HepG2 (cell line): ENCODE measurements at regions of chr16 and their contacts with region 1.

Region 1: DNA sequence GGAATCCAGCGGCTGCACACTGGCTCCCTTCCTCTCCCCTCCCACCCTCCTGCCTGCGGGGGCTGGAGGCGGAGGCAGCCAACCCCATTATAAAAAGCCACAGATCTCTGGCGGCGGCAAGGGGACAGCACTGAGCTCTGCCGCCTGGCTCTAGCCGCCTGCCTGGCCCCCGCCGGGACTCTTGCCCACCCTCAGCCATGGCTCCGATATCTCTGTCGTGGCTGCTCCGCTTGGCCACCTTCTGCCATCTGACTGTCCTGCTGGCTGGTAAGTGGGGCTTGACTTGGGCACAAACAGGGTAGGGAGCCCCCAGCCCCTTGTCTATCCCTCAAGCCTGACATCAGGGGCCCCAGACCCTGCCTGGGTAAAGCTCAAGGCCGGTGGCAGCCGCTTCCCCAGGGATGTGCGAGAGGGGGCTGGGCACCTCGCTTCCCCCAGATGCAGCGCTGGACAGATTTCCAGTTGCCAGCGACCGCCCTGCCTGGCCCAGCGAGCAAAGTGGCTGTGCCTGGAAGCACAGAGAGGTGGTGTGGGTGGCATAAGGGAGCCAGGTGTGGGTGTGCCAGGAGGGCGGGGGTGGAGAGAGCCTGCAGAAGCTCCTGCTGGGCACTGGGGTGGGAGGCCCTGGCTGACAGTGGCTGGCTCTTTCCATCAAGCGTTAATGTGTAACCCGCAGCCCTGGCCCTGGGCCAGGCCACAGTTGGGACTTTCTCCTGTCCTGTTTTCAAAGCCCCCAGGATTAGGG is at the start of gene CX3CL1:
- DNase-seq: peak; percentile 99
- ATAC-seq: peak; percentile 83
- H3K4me3 ChIP-seq: peak within 1 kb of the TSS; percentile 81 to 95 (median 84)
- H3K27ac ChIP-seq: peak within 1 kb of the TSS; percentile 99
- H3K4me1 ChIP-seq: peaks cover 62% of the 10 kb centered on the region
- H3K27me3 ChIP-seq: no peaks in the 10 kb centered on the region; a peak in 1 of 5 replicates
- CTCF ChIP-seq: peak; percentile 59
- EP300 ChIP-seq: peak; percentile 57 to 98; a peak in 2 of 4 replicates
- POLR2A ChIP-seq: peak; percentile 96 to 98
- RAD21 ChIP-seq: peak; percentile 65
- total RNA-seq, gene CX3CL1: 23.4 and 57.3 TPM in 2 replicates

Region 2: GRCh38 chr16:56866943-56867830 is 505.4 kb before region 1 on chr16:
- CTCF ChIA-PET with region 1: no interaction called
- POLR2A ChIA-PET with region 1: no interaction called
- in situ Hi-C with region 1: no loop called
- intact Hi-C with region 1: no loop called
- DNase-seq: peak; percentile 70
- ATAC-seq: peak; percentile 6; the same call in 1 of the 3 replicates
- H3K4me3 ChIP-seq: peak overlapping the region in 2 of 3 experiments; percentile 29 to 50; a peak in 4 of 6 replicates
- H3K27ac ChIP-seq: no peak overlapping the region
- H3K4me1 ChIP-seq: peaks cover 56% of the 10 kb centered on the region
- H3K27me3 ChIP-seq: no peaks in the 10 kb centered on the region
- CTCF ChIP-seq: peak; percentile 74
- EP300 ChIP-seq: no peak
- POLR2A ChIP-seq: no peak
- RAD21 ChIP-seq: peak; percentile 59

Region 3: GRCh38 chr16:57185944-57186871 is 186.3 kb before region 1 on chr16 and contains the starts of genes PSME3IP1 and RSPRY1:
- CTCF ChIA-PET with region 1: no interaction called
- POLR2A ChIA-PET with region 1: interaction called, 13 read pairs
- in situ Hi-C with region 1: no loop called
- intact Hi-C with region 1: no loop called
- DNase-seq: peak; percentile 100
- ATAC-seq: peak; percentile 94
- H3K4me3 ChIP-seq: peak within 1 kb of the TSS; percentile 93 to 99 (median 94)
- H3K27ac ChIP-seq: peak within 1 kb of the TSS; percentile 82
- H3K4me1 ChIP-seq: peaks cover 51% of the 10 kb centered on the region
- H3K27me3 ChIP-seq: no peaks in the 10 kb centered on the region; a peak in 2 of 5 replicates
- CTCF ChIP-seq: no peak; the same call in 1 of the 2 replicates
- EP300 ChIP-seq: peak in 1 of 2 experiments; percentile 20; a peak in 1 of 4 replicates
- POLR2A ChIP-seq: peak; percentile 75 to 94
- RAD21 ChIP-seq: 0 out of 2 replicates have a peak, but pooled peaks have one; percentile 11
- total RNA-seq, gene PSME3IP1: 99.8 and 104 TPM in 2 replicates
- total RNA-seq, gene RSPRY1: 51.7 and 53.4 TPM in 2 replicates

Region 4: DNA sequence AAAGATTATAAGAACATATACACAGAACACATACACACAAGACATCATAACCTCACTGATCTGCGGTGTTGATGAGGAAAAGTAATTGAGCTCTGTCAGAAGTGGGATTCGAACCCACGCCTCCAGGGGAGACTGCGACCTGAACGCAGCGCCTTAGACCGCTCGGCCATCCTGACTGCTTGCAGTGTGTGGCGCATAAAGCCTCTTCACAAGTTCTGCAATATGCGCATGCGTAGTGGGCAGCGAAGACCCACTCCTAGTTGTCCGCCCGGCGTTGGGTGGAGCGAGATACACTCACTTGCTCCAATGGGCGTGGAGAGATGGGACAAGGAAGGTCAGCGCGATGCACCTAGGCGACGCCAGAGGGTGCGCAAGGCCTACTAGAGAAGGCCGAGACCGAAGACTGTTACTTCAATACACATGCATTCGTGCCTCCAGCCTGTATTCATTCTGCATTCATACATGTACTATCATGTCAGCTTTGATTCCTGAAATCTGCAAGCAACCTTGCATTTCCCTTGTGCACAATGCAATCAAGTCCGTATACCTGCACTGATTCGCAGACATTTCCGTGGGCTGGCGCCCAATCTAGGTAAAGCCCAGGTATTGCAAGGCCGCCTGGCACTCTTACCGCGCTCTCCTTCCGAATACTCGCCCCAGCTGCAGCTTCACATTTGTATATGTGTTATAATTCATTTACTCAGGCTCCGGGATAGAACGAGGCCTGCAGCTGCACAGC is 72.0 kb before region 1 on chr16:
- CTCF ChIA-PET with region 1: interaction called, 5 read pairs
- POLR2A ChIA-PET with region 1: interaction called, 303 read pairs
- in situ Hi-C with region 1: loop called (anchors 5 kb)
- intact Hi-C with region 1: loop called (anchors 1 kb)
- DNase-seq: peak; percentile 99
- ATAC-seq: peak; percentile 72
- H3K4me3 ChIP-seq: peak overlapping the region; percentile 62 to 84 (median 63)
- H3K27ac ChIP-seq: peak overlapping the region; percentile 59
- H3K4me1 ChIP-seq: peaks cover 76% of the 10 kb centered on the region
- H3K27me3 ChIP-seq: no peaks in the 10 kb centered on the region; a peak in 1 of 5 replicates
- CTCF ChIP-seq: peak; percentile 100
- EP300 ChIP-seq: peak in 1 of 2 experiments; percentile 16; a peak in 1 of 4 replicates
- POLR2A ChIP-seq: no peak
- RAD21 ChIP-seq: peak; percentile 100

Region 5: DNA sequence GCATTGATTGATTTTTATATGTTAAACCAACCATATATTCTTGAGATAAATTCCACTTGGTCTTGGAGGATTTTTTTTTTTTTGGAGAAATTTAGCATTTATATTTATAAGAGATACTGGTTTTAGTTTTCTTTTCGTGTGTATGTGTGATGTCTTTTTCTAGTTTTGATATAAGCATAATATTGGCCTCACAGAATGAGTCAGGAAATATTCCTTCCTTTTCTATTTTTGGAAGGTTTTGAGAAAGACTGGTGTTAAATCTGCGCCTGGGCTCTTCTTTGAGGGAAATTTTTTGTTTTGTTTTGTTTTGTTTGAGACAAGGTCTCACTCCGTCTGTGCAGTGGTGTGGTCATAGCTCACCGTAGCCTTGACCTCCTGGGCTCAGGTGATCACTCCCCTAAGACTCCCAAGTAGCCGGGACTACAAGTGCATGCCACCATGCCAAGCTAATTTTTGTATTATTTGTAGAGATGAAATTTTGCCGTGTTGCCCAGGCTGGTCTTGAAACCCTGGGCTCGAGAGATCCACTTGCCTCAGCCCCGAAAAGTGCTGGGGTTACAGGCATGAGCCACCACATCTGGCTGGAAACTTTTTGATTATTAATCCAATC is 42.7 kb before region 1 on chr16:
- CTCF ChIA-PET with region 1: no interaction called
- POLR2A ChIA-PET with region 1: interaction called, 11 read pairs
- in situ Hi-C with region 1: no loop called
- intact Hi-C with region 1: no loop called
- DNase-seq: no peak
- ATAC-seq: no peak
- H3K4me3 ChIP-seq: no peak overlapping the region
- H3K27ac ChIP-seq: no peak overlapping the region
- H3K4me1 ChIP-seq: peaks cover 15% of the 10 kb centered on the region; the same call in 1 of the 2 replicates
- H3K27me3 ChIP-seq: peaks cover 0 to 5% of the 10 kb centered on the region in 2 experiments; a peak in 1 of 5 replicates
- CTCF ChIP-seq: no peak
- EP300 ChIP-seq: no peak
- POLR2A ChIP-seq: no peak
- RAD21 ChIP-seq: no peak

Region 6: GRCh38 chr16:57358527-57359095 is 13.9 kb before region 1 on chr16 and contains the start of gene CCL22:
- CTCF ChIA-PET with region 1: no interaction called
- POLR2A ChIA-PET with region 1: interaction called, 30 read pairs
- in situ Hi-C with region 1: no loop called
- intact Hi-C with region 1: no loop called
- DNase-seq: no peak
- ATAC-seq: no peak; the same call in 2 of the 3 replicates
- H3K4me3 ChIP-seq: no peak within 1 kb of the TSS; a peak in 1 of 6 replicates
- H3K27ac ChIP-seq: no peak within 1 kb of the TSS
- H3K4me1 ChIP-seq: peaks cover 22% of the 10 kb centered on the region
- H3K27me3 ChIP-seq: peaks cover 0 to 27% of the 10 kb centered on the region in 2 experiments; a peak in 3 of 5 replicates
- CTCF ChIP-seq: no peak
- EP300 ChIP-seq: no peak
- POLR2A ChIP-seq: no peak
- RAD21 ChIP-seq: no peak
- total RNA-seq, gene CCL22: 0.06 TPM in 1 of 2 replicates, not detected in the other

Region 7: DNA sequence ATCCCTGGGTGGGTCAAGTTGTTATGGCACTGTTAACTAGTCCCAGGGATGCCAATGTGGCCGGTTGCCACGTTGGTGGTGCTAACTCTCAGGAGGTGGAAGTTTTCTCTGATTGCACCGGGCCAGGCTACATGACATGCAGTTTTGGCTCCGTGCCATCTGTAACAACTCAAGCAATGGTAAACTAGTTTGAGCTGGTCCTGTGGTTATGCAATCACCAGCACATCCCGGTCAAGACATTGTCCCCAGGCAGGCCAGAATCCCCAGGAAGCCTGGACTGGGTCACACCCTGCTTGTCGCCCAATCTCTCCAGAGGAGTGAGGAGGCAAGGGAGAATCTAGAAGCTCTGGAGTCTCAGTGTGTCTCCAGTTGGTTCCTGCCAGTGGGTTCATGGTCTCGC is 21.9 kb after region 1 on chr16:
- CTCF ChIA-PET with region 1: no interaction called
- POLR2A ChIA-PET with region 1: interaction called, 12 read pairs
- in situ Hi-C with region 1: no loop called
- intact Hi-C with region 1: no loop called
- DNase-seq: no peak
- ATAC-seq: no peak; the same call in 2 of the 3 replicates
- H3K4me3 ChIP-seq: no peak overlapping the region
- H3K27ac ChIP-seq: no peak overlapping the region
- H3K4me1 ChIP-seq: peaks cover 6% of the 10 kb centered on the region; the same call in 1 of the 2 replicates
- H3K27me3 ChIP-seq: peaks cover 4 to 12% of the 10 kb centered on the region in 2 experiments; a peak in 4 of 5 replicates
- CTCF ChIP-seq: no peak
- EP300 ChIP-seq: no peak
- POLR2A ChIP-seq: no peak
- RAD21 ChIP-seq: no peak

Region 8: DNA sequence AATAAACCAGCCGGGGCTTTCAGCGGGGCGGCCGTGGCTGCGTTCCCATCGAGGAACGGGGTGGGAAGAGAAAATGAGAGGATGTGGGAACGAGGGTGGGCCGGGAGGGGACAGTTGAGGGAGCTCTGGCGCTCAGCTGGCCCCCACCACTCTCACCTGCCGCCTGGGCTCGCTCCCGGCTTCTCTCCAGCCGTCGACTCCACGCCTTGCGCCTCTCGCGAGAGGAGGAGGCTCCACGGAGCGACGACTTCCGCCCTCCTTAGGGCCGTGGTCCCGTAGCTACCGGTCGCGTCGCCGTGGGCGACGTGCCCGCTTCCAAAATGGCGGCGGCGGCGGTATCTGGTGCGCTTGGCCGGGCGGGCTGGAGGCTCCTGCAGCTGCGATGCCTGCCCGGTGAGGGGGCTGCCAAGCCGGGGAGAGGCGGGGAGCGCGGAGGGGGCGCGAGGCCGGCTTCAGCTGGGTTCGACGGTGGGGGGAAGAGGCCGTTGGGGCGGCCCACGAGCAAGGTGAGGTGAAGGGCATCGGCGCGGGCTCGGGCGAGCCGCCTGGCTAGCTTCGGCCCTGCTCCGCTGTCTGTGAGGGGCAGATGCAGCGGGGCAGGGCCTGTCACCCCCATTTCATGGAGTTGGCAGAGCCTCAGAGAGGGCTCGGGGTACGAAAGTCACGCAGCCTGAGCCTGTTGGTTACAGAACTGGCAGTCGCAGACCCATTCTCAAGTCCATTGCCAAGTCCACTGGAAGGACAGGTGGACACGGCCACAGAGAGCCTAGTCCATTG is 74.8 kb after region 1 on chr16 and contains the starts of genes CIAPIN1 and COQ9:
- CTCF ChIA-PET with region 1: no interaction called
- POLR2A ChIA-PET with region 1: interaction called, 33 read pairs
- in situ Hi-C with region 1: no loop called
- intact Hi-C with region 1: no loop called
- DNase-seq: peak; percentile 92
- ATAC-seq: peak; percentile 99
- H3K4me3 ChIP-seq: peak within 1 kb of the TSS; percentile 81 to 95 (median 90)
- H3K27ac ChIP-seq: peak within 1 kb of the TSS; percentile 76
- H3K4me1 ChIP-seq: peaks cover 46% of the 10 kb centered on the region
- H3K27me3 ChIP-seq: no peaks in the 10 kb centered on the region; a peak in 1 of 5 replicates
- CTCF ChIP-seq: peak; percentile 41
- EP300 ChIP-seq: peak in 1 of 2 experiments; percentile 42; a peak in 1 of 4 replicates
- POLR2A ChIP-seq: peak; percentile 90 to 92; a peak in 3 of 4 replicates
- RAD21 ChIP-seq: peak; percentile 63; the same call in 1 of the 2 replicates
- total RNA-seq, gene CIAPIN1: 89.7 and 113 TPM in 2 replicates
- total RNA-seq, gene COQ9: 57.5 and 62.0 TPM in 2 replicates